Activated T-helper 2 cell treated with anti-CD3 and anti-CD28 coated beads, Interferon-gamma antibody, Interleukin-2, Interleukin-4, amounts not matched to agents 10 μg/mL and 5 μg/mL and 100 μg/mL, durations not matched to agents 14 hours and 24 hours and 36 hours (primary cell): ENCODE measurements at regions of chr9 and their contacts with region 1.

Region 1: DNA sequence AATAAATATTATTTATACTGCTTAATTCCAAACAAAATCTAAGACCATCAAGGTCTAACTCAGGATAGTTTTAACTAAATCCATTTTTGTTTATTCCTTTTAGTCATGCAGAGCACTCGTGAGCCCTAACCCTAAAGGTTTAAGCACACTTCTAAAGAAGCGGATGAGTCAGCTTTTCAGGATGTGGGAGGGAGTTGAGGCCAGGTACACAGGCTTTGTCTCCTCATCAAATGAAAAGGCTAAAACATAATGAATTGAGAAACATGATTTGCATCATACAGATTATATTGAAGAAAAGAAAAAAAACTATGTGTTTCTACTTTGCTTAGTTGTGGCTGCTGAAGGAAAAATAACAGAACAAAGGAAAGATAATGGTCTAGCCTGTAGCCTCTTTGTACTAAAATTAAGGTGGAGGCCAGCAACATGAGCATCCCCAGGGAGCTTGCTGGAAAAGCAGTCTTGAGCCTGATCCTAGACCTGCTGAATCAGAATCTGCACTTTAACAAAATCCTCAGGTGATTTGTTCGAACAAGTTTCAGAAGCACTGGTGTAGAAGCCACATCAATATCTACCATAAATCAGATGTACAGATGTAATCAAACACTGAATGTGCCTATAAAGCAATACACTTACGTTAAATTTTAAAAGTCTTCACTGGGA is 21.1 kb upstream of the ISCA1 start:
- DNase-seq: peak; percentile 26
- H3K4me3 Mint-ChIP-seq: peak overlapping the region; percentile 64
- H3K27ac Mint-ChIP-seq: peak overlapping the region; percentile 95
- H3K4me1 Mint-ChIP-seq: peaks cover 48% of the 10 kb centered on the region
- H3K27me3 Mint-ChIP-seq: no peaks in the 10 kb centered on the region

Region 2: DNA sequence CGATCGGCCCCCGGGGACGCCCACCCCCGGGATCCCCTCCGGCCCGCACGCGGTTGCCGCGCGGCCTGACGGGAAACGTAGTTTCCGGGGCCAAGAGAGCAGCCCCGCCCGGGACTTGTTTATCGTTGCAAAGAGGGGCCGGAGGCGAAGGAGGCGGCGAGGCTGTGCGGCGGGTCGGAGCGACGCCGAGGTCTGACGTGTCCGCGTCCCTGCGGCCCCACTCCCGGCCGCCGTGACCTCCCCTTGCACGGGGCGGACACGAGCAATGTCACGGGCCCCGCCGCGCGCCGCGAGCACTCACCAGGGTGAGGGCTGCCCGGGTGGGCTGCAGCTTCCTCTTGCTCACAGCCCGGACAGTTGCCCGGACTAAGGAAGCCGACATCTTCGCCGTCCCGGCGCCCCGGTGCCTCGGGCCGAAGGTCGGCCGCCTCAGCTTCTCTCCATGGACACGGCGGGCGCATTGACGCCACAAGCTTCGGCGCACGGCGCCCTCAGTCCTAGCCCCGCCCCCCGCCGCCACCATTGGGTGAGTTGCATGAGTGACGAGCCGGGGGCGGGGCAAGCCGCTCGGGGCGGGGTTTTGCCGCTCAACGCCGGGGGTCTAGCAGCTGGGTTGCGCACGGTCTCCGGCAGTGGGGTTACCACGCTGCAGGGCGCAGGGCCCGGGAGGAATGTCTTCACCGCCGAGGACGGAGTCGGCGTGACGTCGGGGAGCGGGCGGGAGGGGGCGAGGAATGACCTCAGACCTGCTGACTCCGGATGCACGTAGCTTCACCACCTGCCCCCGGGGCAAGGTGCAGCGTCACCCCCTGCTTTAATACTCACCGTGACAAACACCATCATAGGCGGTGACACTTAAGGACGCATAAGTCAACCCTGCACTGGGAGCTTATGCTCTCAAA is 21.1 kb before region 1 on chr9 and contains the start of gene ISCA1:
- intact Hi-C with region 1: loop called (anchors 2 kb)
- DNase-seq: peak; percentile 92
- H3K4me3 Mint-ChIP-seq: peak within 1 kb of the TSS; percentile 95
- H3K27ac Mint-ChIP-seq: peak within 1 kb of the TSS; percentile 99
- H3K4me1 Mint-ChIP-seq: peaks cover 36% of the 10 kb centered on the region
- H3K27me3 Mint-ChIP-seq: no peaks in the 10 kb centered on the region
- total RNA-seq, gene ISCA1: 28.5 and 28.9 TPM in 2 replicates

Region 3: GRCh38 chr9:86341006-86341491 is 37.6 kb after region 1 on chr9:
- intact Hi-C with region 1: loop called (anchors 2 kb)
- DNase-seq: no peak
- H3K4me3 Mint-ChIP-seq: no peak overlapping the region
- H3K27ac Mint-ChIP-seq: peak overlapping the region; percentile 31
- H3K4me1 Mint-ChIP-seq: peaks cover 48% of the 10 kb centered on the region
- H3K27me3 Mint-ChIP-seq: no peaks in the 10 kb centered on the region

Region 4: GRCh38 chr9:86359151-86359879 is 55.9 kb after region 1 on chr9:
- intact Hi-C with region 1: no loop called
- DNase-seq: no peak
- H3K4me3 Mint-ChIP-seq: no peak overlapping the region
- H3K27ac Mint-ChIP-seq: no peak overlapping the region
- H3K4me1 Mint-ChIP-seq: peaks cover 10% of the 10 kb centered on the region
- H3K27me3 Mint-ChIP-seq: peaks cover 5% of the 10 kb centered on the region